AG04450 (cell line): ENCODE measurements at regions of chr11 and their contacts with region 1.

Region 1: GRCh38 chr11:36564376-36565030 is 3.3 kb upstream of the RAG1 start:
- DNase-seq: peak; percentile 11
- H3K4me3 ChIP-seq: peak overlapping the region; percentile 18; the same call in 1 of the 2 replicates
- H3K27ac ChIP-seq: no peak overlapping the region
- H3K27me3 ChIP-seq: peaks cover 16% of the 10 kb centered on the region
- CTCF ChIP-seq: peak; percentile 76

Region 2: GRCh38 chr11:36577859-36578258 is 13.4 kb after region 1 on chr11:
- CTCF ChIA-PET with region 1: interaction called, 59 read pairs
- POLR2A ChIA-PET with region 1: no interaction called
- DNase-seq: no peak
- H3K4me3 ChIP-seq: no peak overlapping the region
- H3K27ac ChIP-seq: no peak overlapping the region
- H3K27me3 ChIP-seq: no peaks in the 10 kb centered on the region
- CTCF ChIP-seq: no peak

Region 3: DNA sequence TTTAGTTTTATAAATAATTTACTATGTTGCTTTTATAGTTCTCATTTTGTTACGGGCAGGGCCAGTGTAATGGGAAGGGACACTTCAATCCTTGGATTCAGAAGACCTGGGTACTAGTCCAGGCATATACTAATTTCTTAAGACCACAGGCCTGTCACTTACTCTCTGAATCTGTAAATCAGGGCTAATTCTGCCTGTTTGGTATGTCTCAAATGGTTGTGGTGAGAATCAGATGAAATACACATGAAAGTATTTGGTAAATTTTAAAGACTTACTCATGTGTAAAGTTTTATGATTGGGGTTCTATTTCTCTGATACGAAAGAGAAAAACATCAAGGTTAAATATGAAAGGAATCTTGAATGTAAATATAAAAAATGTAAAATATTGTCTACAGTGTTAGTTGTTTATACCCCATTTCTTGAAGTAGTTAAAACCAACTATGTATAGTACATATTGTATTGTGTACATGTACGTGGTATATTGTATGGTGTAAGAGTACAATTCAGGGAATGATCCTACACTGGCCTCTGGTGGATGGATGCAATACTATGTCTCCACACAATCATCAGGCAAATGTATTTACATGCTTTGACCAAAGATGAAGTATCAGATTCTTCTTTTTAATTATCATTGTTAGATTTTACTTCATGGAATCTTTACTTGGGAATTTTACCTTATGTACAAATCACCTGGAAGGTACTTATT is 58.1 kb after region 1 on chr11:
- CTCF ChIA-PET with region 1: interaction called, 23 read pairs
- POLR2A ChIA-PET with region 1: no interaction called
- DNase-seq: peak; percentile 0
- H3K4me3 ChIP-seq: no peak overlapping the region
- H3K27ac ChIP-seq: no peak overlapping the region
- H3K27me3 ChIP-seq: no peaks in the 10 kb centered on the region
- CTCF ChIP-seq: peak; percentile 60

Region 4: DNA sequence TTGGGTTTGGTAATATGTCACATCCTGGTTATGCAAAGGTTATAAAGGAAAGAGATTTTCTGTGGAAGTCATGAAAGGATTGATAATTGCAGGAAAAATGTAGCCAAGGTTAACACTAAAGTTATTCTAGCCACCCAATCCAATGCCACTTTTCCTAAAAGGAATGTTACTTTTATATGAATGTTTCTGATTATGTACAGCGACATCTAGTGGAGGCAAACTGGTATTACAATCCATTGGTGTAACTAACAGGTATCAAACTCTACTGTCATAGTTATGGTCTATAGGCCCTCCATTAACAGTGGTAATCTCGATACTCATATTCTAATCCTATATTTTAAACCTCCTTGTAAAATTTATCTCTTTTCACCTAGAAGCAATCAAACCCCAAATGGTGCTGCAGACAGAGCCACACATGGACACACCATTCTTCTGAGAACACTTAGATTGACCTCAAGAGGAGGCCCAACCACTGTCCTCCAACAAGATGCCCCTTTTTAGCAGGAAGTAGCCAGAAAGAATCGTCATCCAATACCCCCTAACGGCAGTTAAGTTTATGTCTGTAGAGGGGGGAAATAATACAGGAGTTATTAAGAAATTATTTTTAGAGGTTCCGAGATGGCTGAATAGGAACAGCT is 108.4 kb after region 1 on chr11:
- CTCF ChIA-PET with region 1: interaction called, 151 read pairs
- POLR2A ChIA-PET with region 1: no interaction called
- DNase-seq: peak; percentile 3
- H3K4me3 ChIP-seq: no peak overlapping the region
- H3K27ac ChIP-seq: no peak overlapping the region
- H3K27me3 ChIP-seq: no peaks in the 10 kb centered on the region
- CTCF ChIP-seq: peak; percentile 66

Region 5: GRCh38 chr11:36729825-36730224 is 165.3 kb after region 1 on chr11:
- CTCF ChIA-PET with region 1: interaction called, 10 read pairs
- POLR2A ChIA-PET with region 1: no interaction called
- DNase-seq: no peak
- H3K4me3 ChIP-seq: no peak overlapping the region
- H3K27ac ChIP-seq: no peak overlapping the region
- H3K27me3 ChIP-seq: no peaks in the 10 kb centered on the region
- CTCF ChIP-seq: no peak